GM10248 (cell line): ENCODE measurements at regions of chr1 and their contacts with region 1.

Region 1: GRCh38 chr1:247390116-247390791 is 25.7 kb upstream of the NLRP3 start:
- DNase-seq: peak; percentile 88
- CTCF ChIP-seq: peak; percentile 85

Region 2: GRCh38 chr1:247241687-247242086 is 148.6 kb before region 1 on chr1:
- CTCF ChIA-PET with region 1: no interaction called
- POLR2A ChIA-PET with region 1: no interaction called
- DNase-seq: no peak
- CTCF ChIP-seq: no peak

Region 3: DNA sequence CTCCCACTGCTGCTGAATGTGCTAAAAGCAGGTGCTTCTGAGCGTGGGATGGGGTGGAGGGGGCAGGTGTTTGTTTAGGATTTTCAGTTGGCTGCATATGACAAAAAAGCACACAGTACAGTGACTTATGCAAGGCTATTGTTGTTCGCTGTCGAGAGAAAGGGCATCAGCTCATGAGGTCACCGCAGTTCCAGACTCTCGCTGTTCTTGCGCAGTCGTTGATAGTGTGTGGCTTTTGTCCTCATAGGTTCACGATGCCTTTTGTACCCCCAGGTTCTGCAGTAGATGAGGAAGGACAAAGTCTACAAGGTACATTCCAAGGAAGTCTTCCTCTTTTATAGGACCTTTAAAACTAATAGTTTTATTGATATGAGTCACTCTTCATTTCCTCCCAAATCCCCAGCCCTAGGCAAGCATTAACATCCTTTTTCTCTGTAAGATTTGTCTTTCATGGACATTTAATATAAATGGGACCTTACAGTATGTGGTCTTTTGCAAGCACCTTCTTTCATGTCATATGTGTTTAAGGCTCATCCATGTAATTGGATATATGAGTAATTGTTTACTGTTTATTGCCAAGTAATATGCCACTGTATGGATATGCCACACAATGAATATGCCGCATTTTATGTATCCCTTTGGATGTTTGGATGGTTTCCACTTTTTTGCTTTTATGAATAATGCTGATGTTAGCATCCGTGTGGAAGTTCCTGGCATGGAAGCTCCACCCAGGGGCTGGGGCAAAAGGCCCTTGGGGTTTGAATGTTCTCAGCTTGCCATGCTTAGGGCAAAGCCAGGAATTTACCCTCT is 11.3 kb after region 1 on chr1:
- CTCF ChIA-PET with region 1: interaction called, 10 read pairs
- POLR2A ChIA-PET with region 1: interaction called, 4 read pairs
- DNase-seq: no peak
- CTCF ChIP-seq: no peak

Region 4: DNA sequence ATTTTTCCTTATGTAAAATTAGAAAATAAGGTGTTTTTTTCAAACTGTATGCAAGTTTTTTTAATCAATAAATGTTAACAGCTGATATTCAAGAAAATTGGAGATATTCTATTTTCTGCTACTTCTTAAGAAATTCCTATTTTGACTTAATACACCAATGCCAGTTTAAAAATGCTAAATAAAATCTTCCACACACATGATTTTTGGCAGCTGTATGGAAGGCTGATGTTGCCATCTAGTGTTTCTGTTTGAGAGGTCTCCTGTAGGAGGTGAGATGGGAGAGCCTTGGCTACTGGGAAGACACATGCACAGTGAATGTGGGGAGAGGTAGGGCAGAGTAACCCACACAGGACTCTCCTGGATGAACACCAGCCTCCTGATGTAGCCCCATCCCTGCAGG is 96.8 kb after region 1 on chr1:
- CTCF ChIA-PET with region 1: interaction called, 114 read pairs
- POLR2A ChIA-PET with region 1: no interaction called
- DNase-seq: peak; percentile 64
- CTCF ChIP-seq: peak; percentile 73